ENCODE measurements at regions of chr11 and their contacts with region 1.

Region 1: DNA sequence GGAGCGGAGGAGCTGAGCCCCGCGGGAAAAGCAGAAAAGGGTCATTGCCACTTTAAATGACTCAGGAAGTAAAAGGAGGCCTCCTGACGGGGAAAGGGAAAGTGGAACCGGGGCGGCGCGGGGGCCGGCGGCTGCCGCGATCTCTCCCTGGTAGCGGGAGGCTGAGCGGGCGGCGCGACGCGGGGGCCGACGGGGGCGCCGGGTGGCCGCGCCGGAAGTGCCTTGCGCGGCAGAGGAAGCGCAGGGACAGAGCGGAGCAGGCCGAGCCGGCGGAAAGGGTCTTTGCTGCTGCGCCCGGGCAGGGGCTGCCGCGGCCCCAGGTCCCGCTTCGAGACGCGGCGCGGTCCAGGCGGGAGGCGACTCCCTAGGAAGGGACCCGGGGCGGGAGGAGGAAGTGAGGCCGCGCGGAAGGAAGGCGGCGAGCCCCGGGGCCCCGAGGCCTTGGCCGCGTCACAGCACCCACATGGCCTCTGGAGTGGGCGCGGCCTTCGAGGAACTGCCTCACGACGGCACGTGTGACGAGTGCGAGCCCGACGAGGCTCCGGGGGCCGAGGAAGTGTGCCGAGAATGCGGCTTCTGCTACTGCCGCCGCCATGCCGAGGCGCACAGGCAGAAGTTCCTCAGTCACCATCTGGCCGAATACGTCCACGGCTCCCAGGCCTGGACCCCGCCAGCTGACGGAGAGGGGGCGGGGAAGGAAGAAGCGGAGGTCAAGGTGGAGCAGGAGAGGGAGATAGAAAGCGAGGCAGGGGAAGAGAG is at the start of gene TRIM44:
- DNase-seq: peak; percentile 81 to 86 (median 84)
- H3K4me3 ChIP-seq: peak within 1 kb of the TSS; percentile 55 to 81
- H3K4me3 Mint-ChIP-seq: peak within 1 kb of the TSS; percentile 93 to 99 (median 96)
- H3K27ac ChIP-seq: peak within 1 kb of the TSS; percentile 74
- H3K27ac Mint-ChIP-seq: peak within 1 kb of the TSS; percentile 95 to 99 (median 96)
- H3K4me1 ChIP-seq: peaks cover 34% of the 10 kb centered on the region
- H3K4me1 Mint-ChIP-seq: peaks cover 34 to 50% (median 43%) of the 10 kb centered on the region in 4 donors
- H3K27me3 ChIP-seq: no peaks in the 10 kb centered on the region
- H3K27me3 Mint-ChIP-seq: peaks cover 3 to 5% of the 10 kb centered on the region in 2 donors
- total RNA-seq, gene TRIM44: 49.8 to 53.1 TPM

Region 2: GRCh38 chr11:34438529-34439507 is 1224.0 kb before region 1 on chr11 and contains the start of gene CAT:
- CTCF ChIA-PET with region 1: no interaction called
- POLR2A ChIA-PET with region 1: no interaction called
- intact Hi-C with region 1: loop called (anchors 10 kb)
- DNase-seq: peak; percentile 96 to 97 (median 96)
- H3K4me3 ChIP-seq: peak within 1 kb of the TSS; percentile 52 to 90
- H3K4me3 Mint-ChIP-seq: peak within 1 kb of the TSS; percentile 94 to 99 (median 98)
- H3K27ac ChIP-seq: peak within 1 kb of the TSS; percentile 75
- H3K27ac Mint-ChIP-seq: peak within 1 kb of the TSS; percentile 93 to 98 (median 95)
- H3K4me1 ChIP-seq: peaks cover 28% of the 10 kb centered on the region
- H3K4me1 Mint-ChIP-seq: peaks cover 22 to 41% (median 31%) of the 10 kb centered on the region in 4 donors
- H3K27me3 ChIP-seq: no peaks in the 10 kb centered on the region
- H3K27me3 Mint-ChIP-seq: no peaks in the 10 kb centered on the region
- total RNA-seq, gene CAT: 35.1 to 38.4 TPM

Region 3: GRCh38 chr11:35864131-35864530 is 201.3 kb after region 1 on chr11:
- CTCF ChIA-PET with region 1: no interaction called
- POLR2A ChIA-PET with region 1: no interaction called
- intact Hi-C with region 1: no loop called
- DNase-seq: no peak
- H3K4me3 ChIP-seq: no peak overlapping the region
- H3K4me3 Mint-ChIP-seq: no peak overlapping the region
- H3K27ac ChIP-seq: no peak overlapping the region
- H3K27ac Mint-ChIP-seq: no peak overlapping the region
- H3K4me1 ChIP-seq: no peaks in the 10 kb centered on the region
- H3K4me1 Mint-ChIP-seq: no peaks in the 10 kb centered on the region
- H3K27me3 ChIP-seq: no peaks in the 10 kb centered on the region
- H3K27me3 Mint-ChIP-seq: peaks cover 0 to 9% of the 10 kb centered on the region in 2 donors

Region 4: DNA sequence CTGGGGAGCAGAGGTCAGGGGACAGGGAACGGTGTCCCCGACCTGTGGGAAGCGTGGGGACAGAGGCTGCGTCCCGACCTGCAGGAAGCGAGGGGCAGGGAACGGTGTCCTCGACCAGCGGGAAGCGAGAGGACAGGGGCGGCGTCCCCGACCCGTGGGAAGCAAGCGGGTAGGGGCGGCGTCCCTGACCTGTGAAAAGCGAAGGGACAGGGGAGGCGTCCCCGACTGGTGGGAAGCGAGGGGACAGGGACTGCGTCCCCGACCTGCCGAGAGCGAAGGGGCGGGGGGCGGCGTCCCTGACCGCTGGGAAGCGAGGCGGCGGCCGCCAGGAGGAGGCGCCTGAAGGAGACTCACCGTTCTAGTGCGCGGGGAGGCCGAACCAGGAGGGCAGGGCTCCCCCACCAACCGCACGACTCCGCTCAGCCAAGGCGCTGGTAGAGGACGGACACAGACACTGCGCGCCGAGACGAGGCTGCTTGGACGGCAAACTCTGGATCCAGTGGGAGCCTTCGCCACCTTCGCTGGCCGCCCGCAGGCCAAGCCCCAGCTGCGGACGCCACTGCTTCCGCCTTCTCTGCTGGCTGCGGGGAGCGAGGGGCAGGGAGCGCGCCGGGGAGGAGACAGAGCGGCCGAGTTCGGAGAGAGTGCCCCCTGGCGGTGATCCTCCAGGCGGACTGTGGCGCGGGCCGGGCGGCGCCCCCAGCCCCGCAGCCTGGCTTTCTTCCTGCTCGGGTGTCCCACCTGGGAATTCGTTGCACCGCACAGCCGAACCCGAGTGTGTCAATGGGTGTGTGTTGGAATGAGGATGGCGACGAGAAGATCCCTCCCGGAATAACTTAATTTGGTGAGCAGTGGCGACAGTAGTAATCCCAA is 847.1 kb after region 1 on chr11 and contains the start of gene TRAF6:
- CTCF ChIA-PET with region 1: no interaction called
- POLR2A ChIA-PET with region 1: no interaction called
- intact Hi-C with region 1: loop called (anchors 2 kb)
- DNase-seq: peak; percentile 82 to 88 (median 86)
- H3K4me3 ChIP-seq: peak within 1 kb of the TSS; percentile 63 to 96
- H3K4me3 Mint-ChIP-seq: peak within 1 kb of the TSS; percentile 94 to 99 (median 98)
- H3K27ac ChIP-seq: peak within 1 kb of the TSS; percentile 78
- H3K27ac Mint-ChIP-seq: peak within 1 kb of the TSS; percentile 93 to 98 (median 96)
- H3K4me1 ChIP-seq: peaks cover 35% of the 10 kb centered on the region
- H3K4me1 Mint-ChIP-seq: peaks cover 27 to 44% (median 31%) of the 10 kb centered on the region in 4 donors
- H3K27me3 ChIP-seq: peaks cover 4% of the 10 kb centered on the region
- H3K27me3 Mint-ChIP-seq: peaks cover 0 to 4% of the 10 kb centered on the region in 2 donors
- total RNA-seq, gene TRAF6: 22.0 to 23.7 TPM